ENCODE measurements at regions of chr3 and their contacts with region 1.

Region 1: GRCh38 chr3:157856078-157856939 is 249.9 kb downstream of the SHOX2 start:
- DNase-seq: peak; percentile 93
- H3K4me3 Mint-ChIP-seq: no peak overlapping the region
- H3K27ac Mint-ChIP-seq: peak overlapping the region; percentile 42
- H3K4me1 Mint-ChIP-seq: peaks cover 6% of the 10 kb centered on the region
- H3K27me3 Mint-ChIP-seq: no peaks in the 10 kb centered on the region
- CTCF ChIP-seq: peak; percentile 12

Region 2: DNA sequence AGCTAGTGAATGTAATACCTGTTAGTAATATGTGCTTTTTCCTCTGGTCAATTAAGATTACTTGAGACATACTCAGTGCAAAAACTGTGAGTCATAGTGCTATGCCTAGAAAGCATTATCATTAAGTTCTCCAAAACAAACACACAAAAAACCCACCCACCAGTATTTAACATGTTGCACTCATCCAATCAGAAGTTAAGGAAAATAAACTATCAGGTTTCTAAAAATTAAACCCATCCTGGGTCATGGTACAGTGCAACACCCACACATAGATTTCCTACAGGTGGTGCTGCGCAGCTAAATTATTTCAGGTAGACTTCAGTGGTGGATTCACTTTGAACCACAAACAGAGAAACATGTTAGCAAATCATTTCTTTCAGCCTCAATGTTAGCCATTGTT is 88.7 kb before region 1 on chr3:
- CTCF ChIA-PET with region 1: interaction called, 10 read pairs
- POLR2A ChIA-PET with region 1: no interaction called
- intact Hi-C with region 1: no loop called
- DNase-seq: peak; percentile 39
- H3K4me3 Mint-ChIP-seq: no peak overlapping the region
- H3K27ac Mint-ChIP-seq: no peak overlapping the region
- H3K4me1 Mint-ChIP-seq: no peaks in the 10 kb centered on the region
- H3K27me3 Mint-ChIP-seq: no peaks in the 10 kb centered on the region
- CTCF ChIP-seq: no peak

Region 3: GRCh38 chr3:158018462-158018861 is 162.2 kb after region 1 on chr3:
- CTCF ChIA-PET with region 1: no interaction called
- POLR2A ChIA-PET with region 1: no interaction called
- intact Hi-C with region 1: no loop called
- DNase-seq: no peak
- H3K4me3 Mint-ChIP-seq: no peak overlapping the region
- H3K27ac Mint-ChIP-seq: no peak overlapping the region
- H3K4me1 Mint-ChIP-seq: no peaks in the 10 kb centered on the region
- H3K27me3 Mint-ChIP-seq: no peaks in the 10 kb centered on the region
- CTCF ChIP-seq: no peak